MCF 10A (cell line): ENCODE measurements at regions of chr9 and their contacts with region 1.

Region 1: DNA sequence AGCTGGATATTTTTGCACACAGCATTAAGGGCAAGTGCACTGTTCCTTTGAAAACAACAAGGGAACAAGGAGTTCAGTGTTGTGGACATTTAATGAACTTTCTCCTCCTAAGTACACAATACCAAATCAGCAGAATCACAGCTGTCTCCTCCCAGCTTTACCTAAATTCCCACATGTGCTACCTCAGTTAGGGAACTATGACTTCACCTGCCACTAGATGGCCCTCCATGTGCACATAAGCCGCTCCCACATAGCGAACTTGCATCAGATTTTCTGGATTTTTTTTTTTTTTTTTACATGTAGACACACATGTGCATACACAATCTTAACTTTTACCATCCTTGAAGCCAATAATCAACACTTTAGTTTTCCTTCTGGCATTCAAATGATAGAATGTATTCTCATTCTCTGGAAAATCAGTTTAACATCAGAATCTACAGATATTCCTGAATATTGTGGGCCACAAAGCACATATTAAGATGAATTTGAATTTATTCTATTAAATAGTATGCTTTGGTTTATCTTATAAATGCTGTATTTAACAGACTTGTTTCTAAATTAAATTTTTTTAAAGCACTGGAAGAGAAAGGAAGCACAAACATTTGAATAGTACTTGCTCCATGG is 123.6 kb downstream of the PALM2AKAP2 start:
- DNase-seq: peak; percentile 82
- H3K4me3 Mint-ChIP-seq: no peak overlapping the region
- H3K27ac Mint-ChIP-seq: no peak overlapping the region
- H3K4me1 Mint-ChIP-seq: peaks cover 6% of the 10 kb centered on the region
- H3K27me3 Mint-ChIP-seq: no peaks in the 10 kb centered on the region
- CTCF ChIP-seq: peak; percentile 69

Region 2: GRCh38 chr9:109086242-109086641 is 817.4 kb before region 1 on chr9:
- CTCF ChIA-PET with region 1: no interaction called
- POLR2A ChIA-PET with region 1: no interaction called
- intact Hi-C with region 1: no loop called
- DNase-seq: no peak
- H3K4me3 Mint-ChIP-seq: no peak overlapping the region
- H3K27ac Mint-ChIP-seq: no peak overlapping the region
- H3K4me1 Mint-ChIP-seq: peaks cover 11% of the 10 kb centered on the region
- H3K27me3 Mint-ChIP-seq: no peaks in the 10 kb centered on the region
- CTCF ChIP-seq: no peak

Region 3: DNA sequence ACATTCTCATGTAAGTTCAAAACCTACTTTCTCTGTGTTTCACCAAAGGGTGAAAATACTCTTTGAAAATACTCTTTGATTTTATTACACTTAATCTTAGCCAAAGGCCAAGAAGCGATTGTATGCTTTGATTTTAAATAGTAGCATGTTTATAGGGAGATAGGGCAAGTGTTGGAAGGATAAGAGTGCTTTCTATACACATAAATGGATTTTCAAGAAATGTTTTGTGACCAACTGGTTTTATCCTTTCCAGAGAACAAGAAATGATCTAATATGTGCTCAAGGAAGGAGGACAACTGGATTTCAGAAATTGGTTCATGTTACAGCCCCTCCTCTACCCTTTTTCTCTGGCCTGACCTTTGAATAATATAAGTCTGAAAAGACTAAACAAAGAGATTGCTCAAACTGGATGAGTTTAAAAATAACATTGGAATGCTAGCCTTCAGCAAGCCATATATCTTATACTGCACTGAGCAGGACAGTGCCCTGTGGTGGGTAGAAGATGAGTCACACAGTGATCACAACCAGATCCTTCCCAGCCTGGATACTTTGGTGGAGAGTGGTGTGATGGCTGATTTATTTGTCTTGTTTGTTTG is 110.6 kb before region 1 on chr9:
- CTCF ChIA-PET with region 1: no interaction called
- POLR2A ChIA-PET with region 1: no interaction called
- intact Hi-C with region 1: no loop called
- DNase-seq: peak; percentile 83
- H3K4me3 Mint-ChIP-seq: no peak overlapping the region
- H3K27ac Mint-ChIP-seq: no peak overlapping the region
- H3K4me1 Mint-ChIP-seq: peaks cover 10% of the 10 kb centered on the region
- H3K27me3 Mint-ChIP-seq: no peaks in the 10 kb centered on the region
- CTCF ChIP-seq: no peak

Region 4: DNA sequence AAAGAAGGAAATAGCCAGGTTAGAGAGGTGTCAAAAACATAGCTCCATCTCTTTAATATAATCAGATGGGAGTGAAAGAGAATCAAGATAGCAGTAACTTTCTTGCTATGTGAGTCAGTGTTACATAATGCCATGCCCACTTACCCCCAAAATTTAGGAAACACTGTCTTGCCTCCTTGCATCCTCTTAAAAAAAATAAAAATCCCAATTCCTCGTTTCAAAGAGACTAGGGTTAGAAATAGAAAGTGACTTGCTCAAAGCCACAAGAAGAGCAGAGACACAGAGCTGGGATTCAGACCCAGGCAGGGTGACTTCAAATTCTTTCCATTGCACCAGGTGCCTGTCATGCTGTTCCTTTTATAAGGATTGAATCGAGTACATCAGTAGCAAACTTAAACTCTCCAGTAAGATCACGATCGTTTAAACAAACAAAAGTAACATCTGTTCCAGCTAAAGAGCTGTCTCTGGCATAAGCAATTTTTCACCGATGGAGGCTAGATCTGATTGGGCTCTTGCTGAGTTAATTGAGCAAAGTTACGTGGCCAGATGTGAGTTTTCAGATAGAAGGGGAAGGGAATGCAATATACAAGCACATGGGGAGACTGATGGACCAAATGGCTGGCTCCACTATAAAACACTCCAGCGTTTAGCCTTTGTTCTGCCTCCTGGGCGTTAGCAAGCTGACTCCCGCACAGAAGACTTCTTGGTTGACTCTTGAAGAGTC is 53.3 kb after region 1 on chr9:
- CTCF ChIA-PET with region 1: no interaction called
- POLR2A ChIA-PET with region 1: no interaction called
- intact Hi-C with region 1: no loop called
- DNase-seq: no peak
- H3K4me3 Mint-ChIP-seq: no peak overlapping the region
- H3K27ac Mint-ChIP-seq: no peak overlapping the region
- H3K4me1 Mint-ChIP-seq: no peaks in the 10 kb centered on the region
- H3K27me3 Mint-ChIP-seq: no peaks in the 10 kb centered on the region
- CTCF ChIP-seq: no peak

Region 5: GRCh38 chr9:110048403-110048975 is 144.9 kb after region 1 on chr9:
- CTCF ChIA-PET with region 1: interaction called, 11 read pairs
- POLR2A ChIA-PET with region 1: interaction called, 11 read pairs
- intact Hi-C with region 1: loop called (anchors 1 kb)
- DNase-seq: peak; percentile 59
- H3K4me3 Mint-ChIP-seq: peak overlapping the region; percentile 99
- H3K27ac Mint-ChIP-seq: no peak overlapping the region
- H3K4me1 Mint-ChIP-seq: peaks cover 33% of the 10 kb centered on the region
- H3K27me3 Mint-ChIP-seq: no peaks in the 10 kb centered on the region
- CTCF ChIP-seq: no peak

Region 6: DNA sequence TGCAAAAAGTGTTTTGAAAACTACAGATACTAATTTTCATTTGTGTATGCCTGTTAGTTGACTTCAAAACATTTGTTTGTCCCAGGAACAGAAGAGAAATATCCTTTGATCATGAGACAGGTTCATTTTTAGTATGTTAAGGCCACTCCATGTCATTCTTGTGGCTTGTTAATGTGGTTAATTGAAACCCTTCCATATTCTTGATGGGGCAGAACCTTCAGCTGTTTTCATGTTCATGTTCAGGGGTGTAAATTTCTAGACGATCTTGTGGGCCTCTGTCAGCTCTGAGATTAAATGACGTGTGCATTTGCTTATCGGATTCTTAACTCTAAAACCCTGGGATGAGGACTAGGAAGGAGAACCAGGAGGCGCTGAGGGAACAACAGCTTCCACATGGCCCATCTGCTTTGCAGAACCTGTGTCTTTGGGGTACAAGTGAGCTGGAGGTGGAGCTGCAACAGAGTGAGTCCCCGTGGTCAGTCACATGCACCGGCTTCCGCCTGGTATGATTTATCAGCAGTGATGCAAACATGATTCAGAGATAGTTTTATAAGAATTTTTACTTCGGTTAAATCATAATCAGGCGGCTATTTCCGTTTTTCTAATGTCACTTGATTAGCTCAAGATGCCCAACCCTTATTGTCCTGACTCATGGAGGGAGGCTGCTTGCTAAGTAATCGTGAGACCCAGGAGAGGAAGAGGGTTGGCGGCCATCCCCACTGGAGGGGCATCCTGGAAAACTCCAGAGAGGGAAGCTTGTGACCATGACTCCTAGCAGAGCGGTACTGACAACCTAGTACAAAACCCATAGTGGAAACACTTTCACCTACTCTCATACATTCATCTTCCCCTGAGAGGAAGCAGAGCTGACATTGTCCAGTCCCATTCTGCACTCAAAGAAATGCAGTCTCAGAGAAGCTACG is 166.0 kb after region 1 on chr9:
- CTCF ChIA-PET with region 1: interaction called, 14 read pairs
- POLR2A ChIA-PET with region 1: no interaction called
- intact Hi-C with region 1: no loop called
- DNase-seq: peak; percentile 37
- H3K4me3 Mint-ChIP-seq: no peak overlapping the region
- H3K27ac Mint-ChIP-seq: no peak overlapping the region
- H3K4me1 Mint-ChIP-seq: peaks cover 20% of the 10 kb centered on the region
- H3K27me3 Mint-ChIP-seq: no peaks in the 10 kb centered on the region
- CTCF ChIP-seq: no peak

Region 7: DNA sequence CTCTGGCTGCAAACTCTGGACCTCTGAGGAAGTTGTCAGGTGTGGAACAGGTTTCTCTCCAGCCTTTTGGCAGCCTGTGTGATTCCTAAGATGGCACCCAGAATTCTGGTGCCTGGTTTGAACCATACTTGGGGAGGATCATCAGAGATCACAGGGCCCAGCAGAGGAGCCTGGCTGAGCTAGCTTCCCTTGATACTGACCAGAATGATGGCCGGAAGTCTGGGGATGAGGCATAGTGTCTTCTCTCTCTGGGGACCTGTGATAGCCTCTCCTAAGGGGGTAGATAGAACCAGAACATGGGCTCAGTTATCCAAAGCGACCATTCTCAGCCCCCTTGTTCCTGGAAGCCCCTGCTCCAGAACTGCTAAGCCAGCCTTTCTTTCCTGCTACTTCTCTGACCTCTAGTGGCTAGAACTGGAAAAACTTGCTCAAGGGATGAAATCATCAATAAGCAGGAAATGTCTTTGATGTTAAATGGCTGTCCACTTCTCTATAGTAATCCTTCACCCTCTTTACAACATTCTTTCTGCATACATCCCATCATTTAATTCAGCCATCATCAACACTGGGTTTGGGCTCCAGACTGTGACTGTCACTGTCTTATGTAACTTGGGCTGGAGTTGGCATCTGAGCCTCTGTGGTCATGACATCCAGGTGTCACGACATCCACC is 249.2 kb after region 1 on chr9:
- CTCF ChIA-PET with region 1: interaction called, 146 read pairs
- POLR2A ChIA-PET with region 1: no interaction called
- intact Hi-C with region 1: loop called (anchors 1 kb)
- DNase-seq: peak; percentile 66
- H3K4me3 Mint-ChIP-seq: no peak overlapping the region
- H3K27ac Mint-ChIP-seq: no peak overlapping the region
- H3K4me1 Mint-ChIP-seq: no peaks in the 10 kb centered on the region
- H3K27me3 Mint-ChIP-seq: no peaks in the 10 kb centered on the region
- CTCF ChIP-seq: peak; percentile 75

Region 8: GRCh38 chr9:110217656-110218099 is 314.1 kb after region 1 on chr9:
- CTCF ChIA-PET with region 1: no interaction called
- POLR2A ChIA-PET with region 1: no interaction called
- intact Hi-C with region 1: loop called (anchors 2 kb)
- DNase-seq: peak; percentile 50
- H3K4me3 Mint-ChIP-seq: no peak overlapping the region
- H3K27ac Mint-ChIP-seq: no peak overlapping the region
- H3K4me1 Mint-ChIP-seq: peaks cover 11% of the 10 kb centered on the region
- H3K27me3 Mint-ChIP-seq: no peaks in the 10 kb centered on the region
- CTCF ChIP-seq: peak; percentile 47